ENCODE measurements at regions of chr14 and their contacts with region 1.

Region 1: GRCh38 chr14:29016050-29016900 is 249.7 kb downstream of the FOXG1 start:
- DNase-seq: no peak
- H3K4me3 ChIP-seq: no peak overlapping the region
- H3K27ac ChIP-seq: no peak overlapping the region
- H3K4me1 ChIP-seq: no peaks in the 10 kb centered on the region
- H3K27me3 ChIP-seq: no peaks in the 10 kb centered on the region
- CTCF ChIP-seq: peak in 1 of 2 donors; percentile 23

Region 2: GRCh38 chr14:29521526-29522137 is 505.4 kb after region 1 on chr14:
- CTCF ChIA-PET with region 1: no interaction called
- dilution Hi-C with region 1: no loop called
- in situ Hi-C with region 1: no loop called
- intact Hi-C with region 1: loop called (anchors 5 kb)
- DNase-seq: no peak
- H3K4me3 ChIP-seq: no peak overlapping the region
- H3K27ac ChIP-seq: no peak overlapping the region
- H3K4me1 ChIP-seq: no peaks in the 10 kb centered on the region
- H3K27me3 ChIP-seq: no peaks in the 10 kb centered on the region
- CTCF ChIP-seq: peak in 1 of 2 donors; percentile 13

Measured in mammary epithelial cell (primary cell).